HAP-1 (cell line): ENCODE measurements at regions of chr9 and their contacts with region 1.

Region 1: DNA sequence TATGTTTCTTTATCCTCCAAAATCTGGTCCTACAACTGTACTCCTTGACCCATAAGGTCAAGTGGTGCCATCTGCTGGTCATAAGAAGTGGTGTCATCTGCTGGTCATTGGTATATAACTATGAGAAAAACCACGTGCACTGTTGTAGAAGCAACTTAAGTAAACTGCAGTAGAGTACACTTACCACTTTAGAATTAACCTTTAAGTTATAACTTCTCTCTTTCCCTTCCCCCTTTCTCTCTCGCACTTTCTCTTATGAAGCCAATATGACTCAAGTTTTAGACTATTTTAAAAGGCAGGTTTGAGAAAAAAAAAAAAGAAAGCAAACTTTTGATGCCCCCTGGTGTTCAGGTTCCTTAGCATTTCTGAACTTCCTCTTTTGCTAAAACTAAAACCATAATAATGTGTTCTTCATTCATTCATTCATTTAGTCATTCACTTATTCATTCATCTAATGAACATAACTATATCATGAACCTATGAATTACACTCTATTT is 12.8 kb upstream of the MTAP start:
- DNase-seq: peak; percentile 62 to 92
- H3K4me3 ChIP-seq: no peak overlapping the region
- H3K4me1 ChIP-seq: no peaks in the 10 kb centered on the region
- H3K27me3 ChIP-seq: peaks cover 57% of the 10 kb centered on the region

Region 2: DNA sequence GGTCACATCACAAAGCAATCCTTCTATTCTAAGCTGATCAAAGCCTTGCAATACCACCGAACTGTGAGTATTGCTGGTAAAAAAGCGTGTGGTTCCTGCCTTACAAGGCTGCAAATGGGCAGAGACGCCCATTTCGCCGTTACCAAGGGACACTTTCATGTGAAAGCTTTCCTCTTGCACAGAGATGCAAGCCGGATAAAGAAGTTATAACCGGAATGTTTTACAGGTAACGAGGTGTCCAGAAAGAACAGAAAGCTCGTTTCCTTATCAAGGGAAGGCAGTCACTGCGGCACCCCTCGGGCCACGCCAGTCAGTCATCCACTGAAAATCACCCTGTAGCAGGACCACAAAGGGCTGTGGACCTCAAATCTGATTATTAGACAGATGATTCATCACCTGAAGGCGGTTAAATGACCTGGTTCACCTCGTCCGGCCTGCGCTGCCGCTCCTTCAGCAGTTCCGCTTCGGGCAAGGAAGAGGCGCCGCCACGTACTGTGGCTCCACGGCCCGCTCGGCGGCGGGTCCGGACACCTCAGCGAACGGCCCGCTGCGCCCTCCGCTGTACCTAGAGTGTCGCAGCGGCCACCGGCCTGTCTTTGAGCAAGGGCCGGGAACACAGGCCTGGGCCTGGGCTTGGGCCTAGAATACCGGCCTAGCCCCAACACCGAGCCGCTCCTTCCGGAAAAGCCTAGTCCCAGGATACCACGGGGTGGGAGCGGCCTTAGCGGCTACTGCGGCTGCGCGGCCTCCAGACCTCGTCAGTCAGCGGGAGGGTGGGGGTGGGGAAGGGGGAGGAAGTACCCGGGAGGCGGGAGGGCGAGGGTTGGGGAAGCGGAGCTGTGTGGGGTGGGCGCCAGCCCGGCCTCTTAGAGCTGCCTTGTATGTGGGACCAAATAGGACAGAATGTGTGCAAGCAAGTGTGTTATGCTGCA is 454.6 kb before region 1 on chr9 and contains the start of gene KLHL9:
- in situ Hi-C with region 1: loop called (anchors 10 kb)
- DNase-seq: peak; percentile 78 to 92
- H3K4me3 ChIP-seq: peak within 1 kb of the TSS; percentile 75
- H3K4me1 ChIP-seq: peaks cover 6% of the 10 kb centered on the region
- H3K27me3 ChIP-seq: no peaks in the 10 kb centered on the region

Region 3: GRCh38 chr9:21455320-21455719 is 334.3 kb before region 1 on chr9:
- in situ Hi-C with region 1: loop called (anchors 25 kb)
- DNase-seq: peak in 1 of 2 experiments; percentile 4
- H3K4me3 ChIP-seq: no peak overlapping the region
- H3K4me1 ChIP-seq: no peaks in the 10 kb centered on the region
- H3K27me3 ChIP-seq: no peaks in the 10 kb centered on the region

Region 4: GRCh38 chr9:22208846-22209585 is 419.4 kb after region 1 on chr9:
- in situ Hi-C with region 1: no loop called
- DNase-seq: no peak
- H3K4me3 ChIP-seq: no peak overlapping the region
- H3K4me1 ChIP-seq: no peaks in the 10 kb centered on the region
- H3K27me3 ChIP-seq: no peaks in the 10 kb centered on the region